ENCODE measurements at regions of chr4 and their contacts with region 1.

Region 1: GRCh38 chr4:88514557-88515511 is 8.7 kb downstream of the PYURF start:
- DNase-seq: no peak
- H3K4me3 ChIP-seq: no peak overlapping the region
- H3K27ac ChIP-seq: no peak overlapping the region
- H3K4me1 ChIP-seq: no peaks in the 10 kb centered on the region
- H3K27me3 ChIP-seq: no peaks in the 10 kb centered on the region

Region 2: GRCh38 chr4:88366460-88366859 is 148.4 kb before region 1 on chr4:
- CTCF ChIA-PET with region 1: interaction called, 28 read pairs
- POLR2A ChIA-PET with region 1: no interaction called
- DNase-seq: no peak
- H3K4me3 ChIP-seq: no peak overlapping the region
- H3K27ac ChIP-seq: no peak overlapping the region
- H3K4me1 ChIP-seq: no peaks in the 10 kb centered on the region
- H3K27me3 ChIP-seq: no peaks in the 10 kb centered on the region

Region 3: DNA sequence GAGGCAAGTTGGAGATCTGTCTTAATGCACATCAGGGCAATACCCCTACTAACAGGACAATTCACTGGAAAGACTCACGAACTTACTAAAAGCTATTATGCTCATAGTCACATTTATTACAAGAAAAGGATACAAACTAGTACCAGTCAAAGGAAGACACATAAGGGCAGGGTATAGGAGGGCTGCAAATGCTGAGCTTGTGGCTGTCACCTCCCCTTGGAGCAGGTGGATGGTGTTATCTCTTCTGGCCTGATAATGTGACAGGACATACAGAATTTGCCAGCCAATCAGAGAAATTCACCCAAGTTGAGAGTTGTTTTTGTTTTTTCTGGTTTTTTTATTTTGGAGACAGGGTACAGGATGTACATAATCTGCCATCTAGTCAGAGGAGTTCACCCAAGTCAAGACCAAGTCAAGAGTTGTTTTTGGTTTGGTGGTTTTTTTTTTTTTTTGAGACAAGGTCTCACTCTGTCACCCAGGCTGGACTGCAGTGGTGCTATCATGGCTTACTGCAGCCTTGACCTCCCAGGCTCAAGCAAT is 49.1 kb before region 1 on chr4:
- CTCF ChIA-PET with region 1: no interaction called
- POLR2A ChIA-PET with region 1: no interaction called
- DNase-seq: no peak
- H3K4me3 ChIP-seq: no peak overlapping the region
- H3K27ac ChIP-seq: no peak overlapping the region
- H3K4me1 ChIP-seq: no peaks in the 10 kb centered on the region
- H3K27me3 ChIP-seq: no peaks in the 10 kb centered on the region

Region 4: GRCh38 chr4:88503344-88503743 is 11.5 kb before region 1 on chr4:
- CTCF ChIA-PET with region 1: interaction called, 13 read pairs
- POLR2A ChIA-PET with region 1: no interaction called
- DNase-seq: no peak
- H3K4me3 ChIP-seq: no peak overlapping the region
- H3K27ac ChIP-seq: no peak overlapping the region
- H3K4me1 ChIP-seq: no peaks in the 10 kb centered on the region
- H3K27me3 ChIP-seq: no peaks in the 10 kb centered on the region

Region 5: GRCh38 chr4:88549815-88550214 is 35.0 kb after region 1 on chr4:
- CTCF ChIA-PET with region 1: no interaction called
- POLR2A ChIA-PET with region 1: no interaction called
- DNase-seq: no peak
- H3K4me3 ChIP-seq: no peak overlapping the region
- H3K27ac ChIP-seq: no peak overlapping the region
- H3K4me1 ChIP-seq: no peaks in the 10 kb centered on the region
- H3K27me3 ChIP-seq: no peaks in the 10 kb centered on the region